CD4-positive, alpha-beta T cell (primary cell): ENCODE measurements at regions of chr10 and their contacts with region 1.

Region 1: GRCh38 chr10:49538381-49539319 is at the start of gene ERCC6:
- DNase-seq: peak; percentile 92 to 99 (median 96)
- ATAC-seq: peak; percentile 96
- H3K4me3 ChIP-seq: peak within 1 kb of the TSS; percentile 77
- H3K4me3 Mint-ChIP-seq: peak within 1 kb of the TSS; percentile 95
- H3K27ac ChIP-seq: peak within 1 kb of the TSS; percentile 76 to 79
- H3K27ac Mint-ChIP-seq: peak within 1 kb of the TSS; percentile 82
- H3K4me1 ChIP-seq: peaks cover 23% of the 10 kb centered on the region
- H3K4me1 Mint-ChIP-seq: peaks cover 48% of the 10 kb centered on the region
- H3K27me3 ChIP-seq: peaks cover 0 to 5% of the 10 kb centered on the region in 2 experiments
- H3K27me3 Mint-ChIP-seq: peaks cover 23% of the 10 kb centered on the region
- CTCF ChIP-seq: no peak
- total RNA-seq, gene ERCC6: 33.3 to 39.0 TPM

Region 2: DNA sequence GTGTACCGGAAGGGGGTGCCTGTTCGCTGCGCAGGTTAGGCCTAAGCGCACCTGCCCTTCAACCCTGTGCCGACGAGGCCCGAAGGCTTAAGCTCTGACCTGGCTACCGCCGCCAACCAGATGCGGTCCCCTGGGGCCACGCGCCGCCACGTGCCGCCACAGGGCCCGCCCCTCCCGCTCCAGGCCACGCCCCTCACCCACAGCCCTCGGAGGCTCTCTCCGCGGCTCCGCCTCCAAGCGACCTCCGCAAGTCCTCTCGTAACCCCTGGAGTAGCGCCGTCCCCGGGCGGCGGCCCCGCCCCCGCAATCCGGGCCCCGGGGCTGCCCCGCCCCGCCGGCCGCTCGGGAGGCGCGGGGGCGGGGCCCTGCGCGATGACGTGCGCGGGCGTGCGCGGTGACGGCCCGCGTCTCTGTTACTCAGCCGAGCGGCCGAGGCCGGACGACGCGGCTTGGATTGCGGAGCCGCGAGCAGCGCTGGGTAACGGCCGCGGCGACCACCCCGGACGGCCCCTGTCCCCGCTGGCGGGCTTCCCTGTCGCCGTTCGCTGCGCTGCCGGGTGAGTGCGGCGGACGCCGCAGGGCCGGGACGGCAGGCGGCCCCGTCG is 1232.3 kb before region 1 on chr10 and contains the start of gene MAPK8:
- CTCF ChIA-PET with region 1: no interaction called
- POLR2A ChIA-PET with region 1: no interaction called
- intact Hi-C with region 1: loop called in 1 of 2 experiments (anchors 5 kb)
- DNase-seq: peak; percentile 86 to 98 (median 90)
- ATAC-seq: peak; percentile 88
- H3K4me3 ChIP-seq: peak within 1 kb of the TSS; percentile 57
- H3K4me3 Mint-ChIP-seq: peak within 1 kb of the TSS; percentile 91
- H3K27ac ChIP-seq: peak within 1 kb of the TSS; percentile 65 to 86
- H3K27ac Mint-ChIP-seq: peak within 1 kb of the TSS; percentile 93
- H3K4me1 ChIP-seq: peaks cover 15% of the 10 kb centered on the region
- H3K4me1 Mint-ChIP-seq: peaks cover 40% of the 10 kb centered on the region
- H3K27me3 ChIP-seq: no peaks in the 10 kb centered on the region
- H3K27me3 Mint-ChIP-seq: no peaks in the 10 kb centered on the region
- CTCF ChIP-seq: no peak
- total RNA-seq, gene MAPK8: 47.8 to 50.6 TPM

Region 3: GRCh38 chr10:49524496-49524895 is 14.2 kb before region 1 on chr10:
- CTCF ChIA-PET with region 1: no interaction called
- POLR2A ChIA-PET with region 1: interaction called, 14 read pairs
- intact Hi-C with region 1: no loop called
- DNase-seq: no peak
- ATAC-seq: no peak
- H3K4me3 ChIP-seq: no peak overlapping the region
- H3K4me3 Mint-ChIP-seq: no peak overlapping the region
- H3K27ac ChIP-seq: no peak overlapping the region
- H3K27ac Mint-ChIP-seq: no peak overlapping the region
- H3K4me1 ChIP-seq: no peaks in the 10 kb centered on the region
- H3K4me1 Mint-ChIP-seq: no peaks in the 10 kb centered on the region
- H3K27me3 ChIP-seq: no peaks in the 10 kb centered on the region
- H3K27me3 Mint-ChIP-seq: no peaks in the 10 kb centered on the region
- CTCF ChIP-seq: no peak

Region 4: DNA sequence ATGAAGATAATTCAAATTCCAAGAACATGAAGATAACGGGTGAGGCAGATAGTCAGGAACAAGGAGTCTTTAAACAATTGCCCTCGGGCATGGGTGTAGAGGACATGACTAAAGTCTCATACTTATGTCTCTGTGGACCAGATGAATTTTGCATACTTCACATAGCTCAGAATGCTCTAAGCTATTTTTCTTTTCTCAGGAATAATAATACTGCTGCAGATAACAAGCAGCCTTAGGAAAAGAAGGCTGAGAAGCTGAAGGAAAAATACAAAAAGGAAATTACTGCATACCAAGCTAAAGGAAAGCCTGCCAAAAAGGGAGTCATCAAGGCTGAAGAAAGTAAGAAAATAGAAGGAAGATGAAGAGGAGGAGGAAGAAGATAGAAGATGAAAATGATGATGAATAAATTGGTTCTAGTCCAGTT is 13.6 kb after region 1 on chr10:
- CTCF ChIA-PET with region 1: no interaction called
- POLR2A ChIA-PET with region 1: interaction called, 10 read pairs
- intact Hi-C with region 1: no loop called
- DNase-seq: no peak
- ATAC-seq: no peak
- H3K4me3 ChIP-seq: no peak overlapping the region
- H3K4me3 Mint-ChIP-seq: no peak overlapping the region
- H3K27ac ChIP-seq: no peak overlapping the region
- H3K27ac Mint-ChIP-seq: no peak overlapping the region
- H3K4me1 ChIP-seq: no peaks in the 10 kb centered on the region
- H3K4me1 Mint-ChIP-seq: no peaks in the 10 kb centered on the region
- H3K27me3 ChIP-seq: peaks cover 2 to 7% of the 10 kb centered on the region in 2 experiments
- H3K27me3 Mint-ChIP-seq: peaks cover 36% of the 10 kb centered on the region
- CTCF ChIP-seq: no peak

Region 5: GRCh38 chr10:49661218-49661856 is 122.7 kb after region 1 on chr10:
- CTCF ChIA-PET with region 1: no interaction called
- POLR2A ChIA-PET with region 1: no interaction called
- intact Hi-C with region 1: no loop called
- DNase-seq: no peak
- ATAC-seq: no peak
- H3K4me3 ChIP-seq: no peak overlapping the region
- H3K4me3 Mint-ChIP-seq: no peak overlapping the region
- H3K27ac ChIP-seq: no peak overlapping the region
- H3K27ac Mint-ChIP-seq: no peak overlapping the region
- H3K4me1 ChIP-seq: no peaks in the 10 kb centered on the region
- H3K4me1 Mint-ChIP-seq: no peaks in the 10 kb centered on the region
- H3K27me3 ChIP-seq: peaks cover 2 to 7% of the 10 kb centered on the region in 2 experiments
- H3K27me3 Mint-ChIP-seq: peaks cover 8% of the 10 kb centered on the region
- CTCF ChIP-seq: no peak